ENCODE measurements at regions of chr1 and their contacts with region 1.

Region 1: DNA sequence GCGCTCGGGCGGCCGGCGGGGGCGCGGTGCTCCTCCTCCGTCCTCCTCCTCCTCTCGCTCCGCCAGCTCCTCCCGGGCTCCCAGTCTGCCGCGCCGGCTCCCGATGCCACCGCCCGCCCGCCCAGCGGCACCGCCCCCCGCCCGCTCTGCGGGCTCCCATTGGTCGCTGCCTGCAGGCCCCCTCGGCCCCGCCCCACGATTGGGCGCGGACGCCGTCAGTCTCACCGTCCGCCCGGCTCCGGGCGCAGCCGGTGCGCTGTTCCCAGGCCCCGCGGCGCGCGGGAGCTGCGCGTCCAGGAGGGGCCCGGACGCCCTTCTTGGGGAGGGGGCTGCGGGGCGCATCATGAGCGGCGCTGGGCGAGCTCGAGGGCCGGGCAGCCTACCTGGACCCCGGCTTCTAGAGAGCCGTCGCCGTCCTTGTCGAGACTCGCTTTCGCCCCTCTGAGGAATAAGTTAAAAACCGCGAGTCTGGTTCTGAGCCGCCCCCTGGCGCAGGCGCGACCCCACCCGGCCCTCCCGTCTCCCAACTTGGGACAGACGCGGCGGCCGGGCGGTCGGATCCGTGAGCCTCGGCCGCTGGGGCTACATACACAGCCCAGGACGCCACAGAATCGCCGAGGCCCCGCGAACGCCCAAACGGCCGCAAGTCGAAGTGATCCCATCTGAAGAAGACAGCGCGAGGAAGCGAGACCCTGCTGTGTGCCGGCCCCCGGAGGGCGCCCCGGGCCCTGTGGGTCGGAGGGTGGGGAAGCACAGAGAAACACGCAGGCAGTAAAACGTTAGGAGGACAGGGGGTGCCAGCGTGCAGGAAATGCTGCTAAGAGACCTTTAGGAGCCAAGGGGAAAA is at the start of gene SIPA1L2:
- DNase-seq: peak; percentile 97
- H3K4me3 ChIP-seq: peak within 1 kb of the TSS; percentile 84 to 94 (median 92)
- H3K27ac ChIP-seq: peak within 1 kb of the TSS; percentile 92 to 98 (median 96)
- H3K4me1 ChIP-seq: peaks cover 0 to 33% (median 13%) of the 10 kb centered on the region in 4 donors
- H3K27me3 ChIP-seq: no peaks in the 10 kb centered on the region
- CTCF ChIP-seq: peak in 3 of 4 experiments; percentile 30 to 56 (median 51)
- EP300 ChIP-seq: no peak
- POLR2A ChIP-seq: peak; percentile 31 to 47
- total RNA-seq, gene SIPA1L2: 22.5 to 42.5 (median 32.1) TPM

Region 2: DNA sequence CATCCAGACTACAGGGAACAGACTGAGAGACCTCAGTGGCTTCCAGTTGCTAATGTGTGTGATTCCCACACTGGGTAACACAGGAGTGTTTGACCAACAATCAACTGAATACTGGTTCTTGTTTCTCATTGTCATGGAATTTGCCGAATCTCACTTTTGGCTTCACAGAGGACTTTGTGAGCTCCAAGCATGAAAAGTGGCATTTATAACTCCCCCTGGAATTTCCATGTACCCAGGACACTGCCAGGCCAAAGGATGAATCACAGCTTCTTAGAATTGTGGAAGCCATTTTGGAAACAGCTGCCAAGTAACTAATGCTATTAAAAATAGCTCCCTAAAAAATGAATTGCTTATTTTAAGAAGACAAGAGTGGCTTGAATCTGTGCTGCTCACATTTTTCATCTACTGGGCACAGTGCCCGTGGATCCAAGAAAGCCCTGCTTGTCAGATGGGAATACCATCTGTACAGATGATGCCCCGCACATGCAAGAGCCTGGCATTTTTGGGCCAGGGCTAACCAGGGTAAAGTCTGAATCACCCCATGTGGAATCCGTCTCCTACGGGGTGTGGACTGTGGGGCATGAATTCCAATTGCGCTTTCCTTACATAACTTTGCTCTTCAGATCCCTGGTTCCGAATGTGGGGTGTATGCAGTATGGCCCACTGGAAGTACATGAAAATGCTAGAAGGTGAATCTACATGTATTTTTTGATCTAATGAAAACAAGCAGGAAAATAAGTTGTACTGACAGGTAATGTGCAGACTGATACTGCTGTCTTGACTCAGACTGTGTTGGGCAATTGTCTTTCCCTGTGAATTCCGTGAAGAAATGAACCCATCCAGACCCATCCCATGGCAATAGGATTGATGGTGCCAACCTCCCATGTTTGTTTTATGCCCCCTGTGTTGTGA is 487.6 kb before region 1 on chr1:
- intact Hi-C with region 1: loop called (anchors 2 kb)
- DNase-seq: peak; percentile 92
- H3K4me3 ChIP-seq: no peak overlapping the region
- H3K27ac ChIP-seq: peak overlapping the region; percentile 68 to 79 (median 76)
- H3K4me1 ChIP-seq: peaks cover 0 to 19% (median 13%) of the 10 kb centered on the region in 4 donors
- H3K27me3 ChIP-seq: no peaks in the 10 kb centered on the region
- CTCF ChIP-seq: no peak
- EP300 ChIP-seq: peak in 3 of 4 donors; percentile 22 to 78 (median 61)
- POLR2A ChIP-seq: no peak

Region 3: DNA sequence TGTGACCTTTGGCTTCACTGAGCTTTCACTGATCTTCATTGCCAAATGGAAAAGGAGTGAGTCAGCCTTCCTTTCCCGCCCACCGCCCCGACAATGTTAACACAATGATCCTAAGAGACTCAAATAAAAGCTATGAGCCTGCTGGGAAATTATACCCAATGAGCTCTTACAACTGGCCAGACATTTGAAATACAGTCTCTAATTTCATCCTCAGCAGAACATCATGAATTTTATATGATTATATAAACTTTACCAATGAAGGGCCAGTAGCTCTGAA is 252.8 kb before region 1 on chr1:
- intact Hi-C with region 1: no loop called
- DNase-seq: peak; percentile 66
- H3K4me3 ChIP-seq: no peak overlapping the region
- H3K27ac ChIP-seq: peak overlapping the region in 2 of 4 donors; percentile 14 to 31
- H3K4me1 ChIP-seq: peaks cover 0 to 26% (median 19%) of the 10 kb centered on the region in 4 donors
- H3K27me3 ChIP-seq: no peaks in the 10 kb centered on the region
- CTCF ChIP-seq: no peak
- EP300 ChIP-seq: no peak
- POLR2A ChIP-seq: no peak

Region 4: GRCh38 chr1:232511172-232511571 is 119.1 kb before region 1 on chr1:
- intact Hi-C with region 1: loop called (anchors 5 kb)
- DNase-seq: no peak
- H3K4me3 ChIP-seq: no peak overlapping the region
- H3K27ac ChIP-seq: peak overlapping the region in 3 of 4 donors; percentile 2 to 83 (median 79)
- H3K4me1 ChIP-seq: peaks cover 3 to 38% (median 31%) of the 10 kb centered on the region in 4 donors
- H3K27me3 ChIP-seq: no peaks in the 10 kb centered on the region
- CTCF ChIP-seq: no peak
- EP300 ChIP-seq: no peak
- POLR2A ChIP-seq: no peak

Region 5: GRCh38 chr1:232793944-232794343 is 163.7 kb after region 1 on chr1:
- intact Hi-C with region 1: loop called (anchors 5 kb)
- DNase-seq: no peak
- H3K4me3 ChIP-seq: no peak overlapping the region
- H3K27ac ChIP-seq: no peak overlapping the region
- H3K4me1 ChIP-seq: peaks cover 0 to 24% (median 0%) of the 10 kb centered on the region in 4 donors
- H3K27me3 ChIP-seq: no peaks in the 10 kb centered on the region
- CTCF ChIP-seq: peak in 1 of 4 experiments; percentile 16
- EP300 ChIP-seq: no peak
- POLR2A ChIP-seq: no peak

Region 6: DNA sequence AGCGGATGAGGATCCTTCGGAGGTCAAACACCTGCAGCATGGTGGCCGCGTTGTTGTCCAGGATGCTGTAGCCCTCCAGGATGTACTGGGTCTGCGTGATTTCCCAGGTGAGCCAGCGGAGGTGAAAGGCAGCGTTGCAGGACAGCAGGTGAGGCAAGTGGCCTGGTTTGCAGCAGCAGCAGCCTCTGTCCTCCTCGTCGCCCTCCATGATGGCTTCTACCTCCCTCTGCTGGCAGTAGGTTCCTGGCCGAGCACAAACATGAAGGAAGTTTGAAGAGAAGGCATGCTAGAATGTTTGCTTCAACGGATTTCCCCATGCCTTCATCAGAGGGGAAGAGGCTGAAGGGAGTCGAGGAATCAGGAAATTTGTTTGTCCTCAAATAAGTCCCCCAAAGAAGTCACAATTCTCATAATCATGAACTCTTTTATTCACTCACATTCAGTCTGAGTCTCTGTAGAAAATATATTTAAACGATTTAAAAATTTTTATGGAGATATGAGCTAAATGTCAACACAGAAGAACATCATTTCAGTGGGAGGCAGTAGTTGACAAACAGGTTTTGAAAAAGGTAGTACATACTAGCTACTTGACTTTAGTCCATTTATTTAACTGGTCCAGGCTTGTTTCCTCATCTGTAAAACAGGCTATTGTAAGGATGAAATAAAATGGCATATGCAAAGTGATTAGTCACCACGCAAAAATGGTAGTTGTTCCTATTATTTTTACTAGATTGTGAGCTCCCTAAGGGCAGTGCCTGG is 395.1 kb after region 1 on chr1:
- intact Hi-C with region 1: loop called (anchors 2 kb)
- DNase-seq: no peak
- H3K4me3 ChIP-seq: no peak overlapping the region
- H3K27ac ChIP-seq: no peak overlapping the region
- H3K4me1 ChIP-seq: no peaks in the 10 kb centered on the region
- H3K27me3 ChIP-seq: no peaks in the 10 kb centered on the region
- CTCF ChIP-seq: peak in 2 of 4 experiments; percentile 29 to 31
- EP300 ChIP-seq: no peak
- POLR2A ChIP-seq: no peak

Region 7: DNA sequence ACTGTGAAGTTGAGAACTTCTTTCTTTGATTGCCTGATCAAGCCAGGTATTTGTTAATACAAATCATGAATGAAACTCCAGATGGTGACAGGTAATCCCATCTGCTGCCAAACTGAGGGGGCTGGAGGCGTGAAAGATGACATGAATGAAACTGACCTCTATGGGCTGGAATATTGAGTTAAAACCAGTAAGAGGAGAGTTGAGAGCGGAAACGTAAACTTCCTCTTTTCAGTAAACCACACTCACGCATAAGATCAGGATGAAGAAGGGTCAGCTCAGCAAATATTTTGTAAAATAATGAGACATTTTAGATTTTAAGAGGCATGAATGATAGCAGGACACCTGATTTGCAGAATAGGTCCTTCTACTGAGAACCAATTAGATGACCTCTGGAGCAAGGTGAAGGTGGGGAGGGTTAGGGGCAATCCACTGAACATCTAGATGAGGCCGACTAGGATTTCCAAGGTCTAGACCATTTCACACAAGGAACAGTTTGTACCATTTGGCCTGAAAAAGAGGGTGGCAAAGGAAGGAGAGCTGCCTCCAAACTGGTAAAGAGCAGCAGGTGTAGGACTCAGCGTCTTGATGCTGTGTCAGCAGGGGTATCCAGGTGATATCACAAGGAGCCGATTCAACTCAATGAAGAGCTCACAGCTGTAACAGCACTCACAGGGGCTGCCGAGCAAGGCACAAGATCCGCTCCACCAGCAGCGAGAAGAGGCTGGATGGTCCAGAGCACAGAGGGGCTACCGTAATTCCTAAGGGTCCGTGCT is 452.7 kb after region 1 on chr1:
- intact Hi-C with region 1: no loop called
- DNase-seq: no peak
- H3K4me3 ChIP-seq: no peak overlapping the region
- H3K27ac ChIP-seq: no peak overlapping the region
- H3K4me1 ChIP-seq: peaks cover 0 to 11% (median 3%) of the 10 kb centered on the region in 4 donors
- H3K27me3 ChIP-seq: no peaks in the 10 kb centered on the region
- CTCF ChIP-seq: no peak
- EP300 ChIP-seq: no peak
- POLR2A ChIP-seq: no peak

Measured in sigmoid colon (tissue), 7 donors.